Psoas muscle (tissue), 8 donors: ENCODE measurements at regions of chr15 and their contacts with region 1.

Region 1: GRCh38 chr15:81106560-81106959 is 27.5 kb upstream of the CFAP161 start:
- DNase-seq: peak in 1 of 2 donors; percentile 28
- ATAC-seq: peak; percentile 68 to 85 (median 78)
- H3K4me3 ChIP-seq: no peak overlapping the region
- H3K27ac ChIP-seq: no peak overlapping the region
- H3K4me1 ChIP-seq: no peaks in the 10 kb centered on the region
- H3K27me3 ChIP-seq: no peaks in the 10 kb centered on the region
- CTCF ChIP-seq: peak; percentile 71

Region 2: GRCh38 chr15:81000624-81001151 is 105.9 kb before region 1 on chr15 and contains the start of gene TLNRD1:
- intact Hi-C with region 1: loop called in 1 of 2 experiments (anchors 5 kb)
- DNase-seq: peak; percentile 88 to 90
- ATAC-seq: peak; percentile 57 to 77 (median 64)
- H3K4me3 ChIP-seq: peak within 1 kb of the TSS; percentile 84
- H3K27ac ChIP-seq: peak within 1 kb of the TSS; percentile 80
- H3K4me1 ChIP-seq: peaks cover 3% of the 10 kb centered on the region
- H3K27me3 ChIP-seq: peaks cover 0 to 55% (median 13%) of the 10 kb centered on the region in 3 donors
- CTCF ChIP-seq: no peak
- total RNA-seq, gene TLNRD1: 2.4 to 4.4 (median 2.7) TPM

Region 3: DNA sequence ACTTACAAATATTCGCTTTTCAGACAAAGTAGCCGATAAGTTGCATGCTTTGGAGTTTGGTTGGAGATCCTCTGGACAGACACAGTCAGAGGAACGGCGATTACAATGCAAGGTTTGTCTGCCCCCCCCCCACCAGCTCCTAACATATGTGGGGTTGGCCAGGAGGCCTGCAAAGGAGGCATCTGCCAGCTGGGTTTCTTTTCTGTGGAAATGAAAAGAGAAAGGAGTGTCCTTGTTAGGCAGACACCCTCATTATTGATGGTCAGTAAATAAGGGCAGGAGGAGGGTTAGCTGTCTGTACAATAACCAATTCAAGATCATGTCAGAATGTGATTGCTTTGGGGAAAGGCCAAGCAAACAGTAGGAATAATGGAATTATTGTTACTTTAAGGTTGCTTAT is 56.7 kb before region 1 on chr15:
- intact Hi-C with region 1: loop called in 1 of 2 experiments (anchors 10 kb)
- DNase-seq: no peak
- ATAC-seq: no peak
- H3K4me3 ChIP-seq: no peak overlapping the region
- H3K27ac ChIP-seq: no peak overlapping the region
- H3K4me1 ChIP-seq: no peaks in the 10 kb centered on the region
- H3K27me3 ChIP-seq: no peaks in the 10 kb centered on the region
- CTCF ChIP-seq: no peak

Region 4: GRCh38 chr15:81265944-81266775 is 159.6 kb after region 1 on chr15:
- intact Hi-C with region 1: loop called (anchors 1 to 5 kb)
- DNase-seq: peak; percentile 82 to 86
- ATAC-seq: peak; percentile 91 to 97 (median 94)
- H3K4me3 ChIP-seq: peak overlapping the region; percentile 12
- H3K27ac ChIP-seq: no peak overlapping the region
- H3K4me1 ChIP-seq: peaks cover 5% of the 10 kb centered on the region
- H3K27me3 ChIP-seq: peaks cover 0 to 6% (median 0%) of the 10 kb centered on the region in 3 donors
- CTCF ChIP-seq: peak; percentile 81

Region 5: GRCh38 chr15:81400640-81401236 is 294.2 kb after region 1 on chr15:
- intact Hi-C with region 1: loop called in 1 of 2 experiments (anchors 10 kb)
- DNase-seq: no peak
- ATAC-seq: no peak
- H3K4me3 ChIP-seq: no peak overlapping the region
- H3K27ac ChIP-seq: no peak overlapping the region
- H3K4me1 ChIP-seq: no peaks in the 10 kb centered on the region
- H3K27me3 ChIP-seq: peaks cover 0 to 2% (median 0%) of the 10 kb centered on the region in 3 donors
- CTCF ChIP-seq: peak; percentile 53

Region 6: GRCh38 chr15:81596159-81596865 is 489.8 kb after region 1 on chr15:
- intact Hi-C with region 1: no loop called
- DNase-seq: no peak
- ATAC-seq: no peak
- H3K4me3 ChIP-seq: no peak overlapping the region
- H3K27ac ChIP-seq: no peak overlapping the region
- H3K4me1 ChIP-seq: no peaks in the 10 kb centered on the region
- H3K27me3 ChIP-seq: no peaks in the 10 kb centered on the region
- CTCF ChIP-seq: no peak